Activated T-helper 1 cell treated with anti-CD3 and anti-CD28 coated beads, Interleukin-12 subunit alpha, Interleukin-12 subunit beta, Interleukin-2, Interleukin-4 antibody, amounts not matched to agents 30 ng/mL and 10 ng/mL and 1 ng/mL, durations not matched to agents 14 hours and 24 hours and 36 hours (primary cell): ENCODE measurements at regions of chr19 and their contacts with region 1.

Region 1: GRCh38 chr19:55216461-55217198 is 7.3 kb upstream of the PTPRH start:
- DNase-seq: peak; percentile 31
- H3K4me3 Mint-ChIP-seq: peak overlapping the region; percentile 63
- H3K27ac Mint-ChIP-seq: peak overlapping the region; percentile 67
- H3K4me1 Mint-ChIP-seq: peaks cover 11% of the 10 kb centered on the region
- H3K27me3 Mint-ChIP-seq: peaks cover 11% of the 10 kb centered on the region

Region 2: DNA sequence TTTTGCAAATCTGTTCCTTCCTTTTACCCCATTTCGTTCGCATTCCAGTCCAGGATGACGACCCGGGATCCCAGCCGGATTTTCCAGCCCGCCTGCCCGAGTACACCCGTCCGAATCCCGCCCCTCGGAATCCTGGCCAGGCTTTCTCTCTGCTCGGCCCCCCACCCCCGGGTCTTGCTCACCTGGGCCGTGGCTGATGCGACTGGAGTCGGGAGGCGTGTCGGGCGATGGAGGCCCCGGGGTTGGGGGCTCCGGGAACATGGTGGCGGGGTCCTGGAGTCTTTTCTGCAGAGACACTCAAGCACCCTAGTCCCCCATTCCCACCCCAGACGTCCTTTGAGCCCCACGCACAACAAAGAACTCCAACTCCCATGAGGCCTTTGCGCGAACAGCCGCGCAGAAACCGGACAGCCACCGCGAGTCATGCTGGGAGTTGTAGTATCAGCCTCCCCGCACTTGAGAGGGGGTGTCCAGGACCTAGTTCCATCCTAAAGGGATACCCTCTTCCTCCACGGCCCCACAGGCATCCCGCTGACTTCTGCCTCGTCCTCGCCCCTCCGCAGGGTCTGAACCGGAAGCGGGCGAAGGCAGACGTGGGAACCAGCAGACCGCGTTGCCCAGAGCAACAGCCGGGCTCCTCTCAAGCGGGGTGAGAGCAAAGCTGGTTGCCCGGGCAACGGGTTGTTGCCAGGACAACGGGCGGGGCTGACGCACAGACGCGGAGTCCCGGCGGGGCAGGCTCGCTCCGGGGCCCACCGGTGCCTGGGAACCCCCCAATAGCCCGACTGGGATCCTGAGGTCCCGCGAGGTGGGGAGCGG is 37.6 kb before region 1 on chr19:
- intact Hi-C with region 1: loop called (anchors 2 kb)
- DNase-seq: peak; percentile 90
- H3K4me3 Mint-ChIP-seq: peak overlapping the region; percentile 64
- H3K27ac Mint-ChIP-seq: peak overlapping the region; percentile 34
- H3K4me1 Mint-ChIP-seq: peaks cover 11% of the 10 kb centered on the region
- H3K27me3 Mint-ChIP-seq: peaks cover 36% of the 10 kb centered on the region

Region 3: GRCh38 chr19:55251341-55252081 is 34.9 kb after region 1 on chr19:
- intact Hi-C with region 1: no loop called
- DNase-seq: peak; percentile 28
- H3K4me3 Mint-ChIP-seq: peak overlapping the region; percentile 84
- H3K27ac Mint-ChIP-seq: peak overlapping the region; percentile 96
- H3K4me1 Mint-ChIP-seq: peaks cover 69% of the 10 kb centered on the region
- H3K27me3 Mint-ChIP-seq: no peaks in the 10 kb centered on the region